PC-9 (cell line): ENCODE measurements at regions of chr3 and their contacts with region 1.

Region 1: DNA sequence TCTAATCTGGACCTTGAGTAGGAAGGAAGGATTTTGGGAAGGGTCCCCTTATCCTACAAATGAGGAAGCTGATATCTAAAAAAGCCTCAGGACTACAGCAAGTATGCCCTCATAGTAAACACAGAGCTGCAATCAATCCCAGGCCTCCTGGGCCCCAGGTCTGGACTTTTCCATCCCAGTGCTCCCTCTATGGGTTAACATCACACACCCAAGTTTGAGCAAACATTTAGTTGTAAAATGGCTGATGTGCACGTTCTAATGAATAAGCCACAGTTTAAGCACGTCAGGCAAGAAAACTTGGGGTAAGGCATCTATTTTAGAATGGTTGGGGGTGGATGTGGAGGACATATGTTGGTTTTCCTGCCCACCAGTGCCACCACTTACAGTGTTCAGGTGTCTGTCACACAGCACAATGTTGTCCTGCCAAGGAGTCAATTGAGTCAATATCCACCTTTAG is 44.3 kb upstream of the UBE2E1 start:
- DNase-seq: peak in 1 of 2 experiments; percentile 10
- H3K4me3 ChIP-seq: no peak overlapping the region
- H3K27ac ChIP-seq: no peak overlapping the region
- H3K4me1 ChIP-seq: no peaks in the 10 kb centered on the region
- H3K27me3 ChIP-seq: no peaks in the 10 kb centered on the region
- CTCF ChIP-seq: peak; percentile 50

Region 2: DNA sequence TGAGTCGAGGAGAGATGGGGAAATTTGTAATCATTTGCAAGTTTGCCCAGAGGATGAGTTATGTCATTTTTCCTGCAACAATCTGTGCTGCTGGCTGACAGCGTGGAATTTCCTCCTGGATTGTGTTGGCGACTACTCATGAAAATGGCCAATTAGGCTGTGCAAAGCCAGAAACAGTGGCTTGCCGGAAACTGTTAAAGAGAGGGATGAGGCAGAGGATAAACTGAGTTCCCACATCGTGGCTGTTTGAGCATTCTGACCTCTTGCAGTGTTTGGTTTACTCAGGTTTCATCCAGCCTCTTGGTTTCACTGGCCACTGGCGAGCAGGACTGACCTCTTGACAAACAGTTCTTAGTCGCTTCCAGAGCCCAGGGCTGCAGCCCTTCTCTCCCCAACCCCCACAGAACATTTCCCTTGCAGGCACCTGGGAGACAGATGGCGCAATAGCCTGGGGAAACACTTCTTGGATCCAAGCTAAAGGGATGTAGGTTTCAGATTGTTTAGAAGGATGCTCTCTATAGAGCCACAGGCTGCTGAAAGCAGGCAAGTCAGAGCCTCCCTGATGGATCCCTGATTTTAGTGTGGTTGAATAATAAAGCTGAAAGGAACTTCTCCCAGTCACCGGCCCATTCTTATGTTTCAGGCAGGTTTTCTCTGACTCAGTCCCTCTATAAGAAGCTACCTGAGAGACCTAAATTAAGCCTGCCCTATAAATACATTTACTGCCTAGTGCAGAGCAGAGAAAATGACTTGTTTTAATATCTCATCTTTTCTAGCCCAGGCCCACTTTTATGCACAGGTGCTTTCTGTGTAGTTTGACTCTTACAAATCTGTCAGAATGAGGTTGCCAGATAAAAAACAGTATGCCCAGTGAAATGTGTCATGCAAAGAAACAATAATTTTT is 48.6 kb before region 1 on chr3:
- CTCF ChIA-PET with region 1: no interaction called
- POLR2A ChIA-PET with region 1: no interaction called
- intact Hi-C with region 1: loop called (anchors 5 kb)
- DNase-seq: peak; percentile 59 to 78
- H3K4me3 ChIP-seq: no peak overlapping the region; the same call in 1 of the 2 replicates
- H3K27ac ChIP-seq: peak overlapping the region; percentile 59
- H3K4me1 ChIP-seq: peaks cover 20% of the 10 kb centered on the region
- H3K27me3 ChIP-seq: no peaks in the 10 kb centered on the region
- CTCF ChIP-seq: no peak